K562 (cell line): ENCODE measurements at regions of chrX and their contacts with region 1.

Region 1: DNA sequence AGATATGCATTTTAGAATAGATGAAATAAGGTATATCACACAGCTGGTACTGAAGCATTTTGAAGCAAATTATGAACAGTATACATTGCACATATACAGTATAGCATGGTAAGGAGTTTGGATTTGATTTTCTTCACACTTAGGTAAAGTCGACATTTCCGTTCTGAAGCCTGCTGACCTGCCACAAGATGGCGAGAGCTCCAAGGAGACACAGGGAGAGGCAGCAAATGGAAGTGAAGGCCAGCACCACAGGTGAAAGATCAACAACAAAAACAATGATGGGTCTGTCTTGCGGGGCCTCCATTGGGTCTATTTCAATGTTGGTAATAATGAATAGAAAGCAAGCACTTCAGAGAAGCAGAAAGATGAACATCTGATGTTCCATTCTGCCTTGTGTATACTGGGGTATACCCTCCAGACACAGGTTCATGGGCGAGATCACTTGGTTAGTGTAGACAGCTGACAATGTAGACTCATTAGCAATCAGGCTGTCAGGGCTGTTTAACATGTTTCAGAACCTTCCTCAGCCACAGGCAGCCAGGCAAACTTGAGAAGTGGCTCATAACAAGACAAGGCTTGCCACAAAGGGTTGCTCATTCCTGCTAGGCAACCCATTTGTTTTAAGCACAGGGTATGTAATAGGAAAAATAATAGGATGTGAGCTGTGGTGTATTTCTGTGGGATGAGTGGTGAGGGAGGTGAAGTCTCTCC is 21.4 kb upstream of the NOX1 start:
- DNase-seq: peak in 2 of 4 experiments; percentile 12 to 50
- ATAC-seq: peak; percentile 81
- H3K4me3 ChIP-seq: no peak overlapping the region
- H3K27ac ChIP-seq: no peak overlapping the region
- H3K4me1 ChIP-seq: no peaks in the 10 kb centered on the region
- H3K27me3 ChIP-seq: no peaks in the 10 kb centered on the region
- CTCF ChIP-seq: peak; percentile 52 to 62 (median 56)
- EP300 ChIP-seq: no peak
- POLR2A ChIP-seq: no peak
- RAD21 ChIP-seq: peak; percentile 30 to 79; a peak in 2 of 4 replicates

Region 2: GRCh38 chrX:101206471-101206870 is 311.0 kb after region 1 on chrX:
- CTCF ChIA-PET with region 1: interaction called, 7 read pairs
- POLR2A ChIA-PET with region 1: no interaction called
- in situ Hi-C with region 1: loop called (anchors 10 kb)
- intact Hi-C with region 1: loop called (anchors 1 kb)
- DNase-seq: peak; percentile 19 to 51 (median 32)
- ATAC-seq: peak; percentile 94
- H3K4me3 ChIP-seq: no peak overlapping the region
- H3K27ac ChIP-seq: no peak overlapping the region
- H3K4me1 ChIP-seq: no peaks in the 10 kb centered on the region
- H3K27me3 ChIP-seq: no peaks in the 10 kb centered on the region
- CTCF ChIP-seq: peak; percentile 48 to 79 (median 64); a peak in 5 of 6 replicates
- EP300 ChIP-seq: no peak
- POLR2A ChIP-seq: no peak
- RAD21 ChIP-seq: peak; percentile 56 to 83

Region 3: DNA sequence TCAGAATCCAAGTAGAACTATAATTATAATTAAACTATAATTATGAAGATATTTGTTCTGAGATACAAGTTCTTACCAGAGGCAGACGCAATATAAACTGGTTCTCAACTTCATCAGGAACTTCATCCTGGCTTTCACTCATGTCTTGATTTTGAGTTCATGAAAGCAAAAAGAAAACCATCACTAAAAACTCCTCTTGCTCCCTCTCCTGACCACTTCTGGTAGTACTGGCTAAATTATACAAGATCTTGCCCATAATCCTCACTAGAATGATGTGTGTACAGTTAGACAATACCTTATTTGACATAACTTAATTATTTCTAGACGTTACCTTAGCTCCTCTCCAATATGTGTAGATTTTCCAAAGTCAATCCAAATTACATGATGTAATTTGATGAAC is 391.9 kb after region 1 on chrX:
- CTCF ChIA-PET with region 1: no interaction called
- POLR2A ChIA-PET with region 1: no interaction called
- in situ Hi-C with region 1: no loop called
- intact Hi-C with region 1: loop called (anchors 10 kb)
- DNase-seq: peak; percentile 13 to 49 (median 20)
- ATAC-seq: peak; percentile 81
- H3K4me3 ChIP-seq: no peak overlapping the region
- H3K27ac ChIP-seq: no peak overlapping the region
- H3K4me1 ChIP-seq: no peaks in the 10 kb centered on the region
- H3K27me3 ChIP-seq: no peaks in the 10 kb centered on the region; a peak in 1 of 5 replicates
- CTCF ChIP-seq: peak; percentile 39 to 60 (median 51); a peak in 4 of 6 replicates
- EP300 ChIP-seq: no peak
- POLR2A ChIP-seq: no peak
- RAD21 ChIP-seq: peak; percentile 20 to 69; a peak in 3 of 4 replicates